CD4-positive, alpha-beta memory T cell (primary cell): ENCODE measurements at regions of chr2 and their contacts with region 1.

Region 1: GRCh38 chr2:231503766-231504165 is 26.5 kb downstream of the NMUR1 start:
- DNase-seq: no peak
- H3K4me3 ChIP-seq: no peak overlapping the region
- H3K4me3 Mint-ChIP-seq: no peak overlapping the region
- H3K27ac ChIP-seq: no peak overlapping the region
- H3K27ac Mint-ChIP-seq: no peak overlapping the region
- H3K4me1 ChIP-seq: no peaks in the 10 kb centered on the region
- H3K4me1 Mint-ChIP-seq: no peaks in the 10 kb centered on the region
- H3K27me3 ChIP-seq: no peaks in the 10 kb centered on the region
- H3K27me3 Mint-ChIP-seq: no peaks in the 10 kb centered on the region

Region 2: DNA sequence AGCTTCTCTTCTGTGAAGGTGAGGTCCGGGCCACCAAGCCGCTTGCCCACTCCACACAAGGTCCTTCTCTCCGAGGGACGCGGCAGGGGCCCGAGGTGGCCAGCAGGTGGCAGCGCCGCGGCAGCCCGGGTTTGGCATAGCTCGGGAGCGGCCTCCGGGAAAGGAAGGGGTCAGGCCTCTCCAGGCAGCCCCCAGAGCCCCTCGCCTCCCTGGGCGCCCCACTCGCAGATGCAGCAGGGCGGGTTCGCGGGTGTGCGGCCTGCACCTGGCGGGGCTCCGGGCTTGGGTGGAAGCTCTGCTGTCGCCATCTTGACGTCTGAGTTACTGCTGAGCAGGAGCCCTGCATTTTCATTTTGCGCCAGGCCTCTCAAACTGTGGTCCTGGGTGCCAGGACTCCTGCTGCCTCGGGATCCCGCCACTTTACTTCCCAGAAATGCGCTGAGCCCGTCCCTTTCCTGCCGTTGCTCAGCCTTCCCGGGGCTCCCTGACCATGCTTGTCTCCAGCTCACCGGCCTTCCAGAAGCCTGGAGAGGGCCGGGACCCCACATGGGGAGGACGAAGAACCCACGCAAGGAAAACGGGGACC is 20.9 kb before region 1 on chr2:
- CTCF ChIA-PET with region 1: interaction called, 24 read pairs
- POLR2A ChIA-PET with region 1: no interaction called
- intact Hi-C with region 1: no loop called
- DNase-seq: peak; percentile 61 to 68 (median 65)
- H3K4me3 ChIP-seq: peak overlapping the region; percentile 62 to 65
- H3K4me3 Mint-ChIP-seq: peak overlapping the region; percentile 63 to 87 (median 79)
- H3K27ac ChIP-seq: peak overlapping the region; percentile 80
- H3K27ac Mint-ChIP-seq: peak overlapping the region; percentile 81 to 94 (median 89)
- H3K4me1 ChIP-seq: peaks cover 12% of the 10 kb centered on the region
- H3K4me1 Mint-ChIP-seq: peaks cover 4 to 27% (median 5%) of the 10 kb centered on the region in 4 donors
- H3K27me3 ChIP-seq: no peaks in the 10 kb centered on the region
- H3K27me3 Mint-ChIP-seq: no peaks in the 10 kb centered on the region

Region 3: GRCh38 chr2:231523451-231524285 is 19.9 kb after region 1 on chr2:
- CTCF ChIA-PET with region 1: no interaction called
- POLR2A ChIA-PET with region 1: no interaction called
- intact Hi-C with region 1: no loop called
- DNase-seq: peak in 4 of 5 donors; percentile 25 to 48 (median 46)
- H3K4me3 ChIP-seq: no peak overlapping the region
- H3K4me3 Mint-ChIP-seq: peak overlapping the region in 6 of 8 donors; percentile 55 to 80 (median 69)
- H3K27ac ChIP-seq: no peak overlapping the region
- H3K27ac Mint-ChIP-seq: peak overlapping the region; percentile 35 to 83 (median 76)
- H3K4me1 ChIP-seq: peaks cover 33% of the 10 kb centered on the region
- H3K4me1 Mint-ChIP-seq: peaks cover 17 to 53% (median 34%) of the 10 kb centered on the region in 4 donors
- H3K27me3 ChIP-seq: no peaks in the 10 kb centered on the region
- H3K27me3 Mint-ChIP-seq: no peaks in the 10 kb centered on the region

Region 4: DNA sequence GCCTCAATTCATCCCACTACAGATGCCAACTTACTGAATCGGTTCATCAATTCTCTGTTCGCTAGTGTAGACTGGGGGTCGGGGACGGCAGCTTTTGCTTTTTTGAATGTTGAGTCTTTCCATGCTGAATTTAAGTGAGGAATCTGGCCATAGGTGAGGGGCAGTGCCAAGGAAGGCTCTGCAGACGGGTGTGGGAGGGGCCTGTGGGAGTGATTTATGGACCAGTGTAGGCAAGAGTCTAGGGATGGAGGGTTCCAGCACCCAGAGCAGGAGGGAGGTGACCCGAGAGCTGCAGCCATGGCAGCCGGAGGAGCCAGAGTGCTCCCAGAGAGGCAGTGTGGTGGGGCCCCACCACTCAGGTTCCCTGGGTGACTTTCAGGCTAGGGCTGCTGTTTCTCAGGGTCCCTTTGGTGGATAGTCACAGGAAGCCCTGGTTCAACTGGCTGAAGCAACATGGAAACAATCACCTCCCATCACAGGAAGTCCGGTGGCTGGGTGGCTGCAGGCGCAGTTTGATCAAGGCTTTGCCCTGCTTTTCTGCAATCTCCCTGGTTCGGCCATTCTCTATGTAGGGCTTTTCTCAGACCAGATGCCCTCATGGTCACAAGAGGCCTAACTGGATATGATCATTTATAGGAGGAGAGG is 72.0 kb after region 1 on chr2:
- CTCF ChIA-PET with region 1: no interaction called
- POLR2A ChIA-PET with region 1: no interaction called
- intact Hi-C with region 1: no loop called
- DNase-seq: no peak
- H3K4me3 ChIP-seq: no peak overlapping the region
- H3K4me3 Mint-ChIP-seq: no peak overlapping the region
- H3K27ac ChIP-seq: no peak overlapping the region
- H3K27ac Mint-ChIP-seq: no peak overlapping the region
- H3K4me1 ChIP-seq: no peaks in the 10 kb centered on the region
- H3K4me1 Mint-ChIP-seq: peaks cover 0 to 2% (median 0%) of the 10 kb centered on the region in 4 donors
- H3K27me3 ChIP-seq: no peaks in the 10 kb centered on the region
- H3K27me3 Mint-ChIP-seq: peaks cover 3% of the 10 kb centered on the region in 2 donors